Activated CD4-positive, alpha-beta T cell treated with anti-CD3 and anti-CD28 coated beads for 36 hours (primary cell): ENCODE measurements at regions of chrX and their contacts with region 1.

Region 1: DNA sequence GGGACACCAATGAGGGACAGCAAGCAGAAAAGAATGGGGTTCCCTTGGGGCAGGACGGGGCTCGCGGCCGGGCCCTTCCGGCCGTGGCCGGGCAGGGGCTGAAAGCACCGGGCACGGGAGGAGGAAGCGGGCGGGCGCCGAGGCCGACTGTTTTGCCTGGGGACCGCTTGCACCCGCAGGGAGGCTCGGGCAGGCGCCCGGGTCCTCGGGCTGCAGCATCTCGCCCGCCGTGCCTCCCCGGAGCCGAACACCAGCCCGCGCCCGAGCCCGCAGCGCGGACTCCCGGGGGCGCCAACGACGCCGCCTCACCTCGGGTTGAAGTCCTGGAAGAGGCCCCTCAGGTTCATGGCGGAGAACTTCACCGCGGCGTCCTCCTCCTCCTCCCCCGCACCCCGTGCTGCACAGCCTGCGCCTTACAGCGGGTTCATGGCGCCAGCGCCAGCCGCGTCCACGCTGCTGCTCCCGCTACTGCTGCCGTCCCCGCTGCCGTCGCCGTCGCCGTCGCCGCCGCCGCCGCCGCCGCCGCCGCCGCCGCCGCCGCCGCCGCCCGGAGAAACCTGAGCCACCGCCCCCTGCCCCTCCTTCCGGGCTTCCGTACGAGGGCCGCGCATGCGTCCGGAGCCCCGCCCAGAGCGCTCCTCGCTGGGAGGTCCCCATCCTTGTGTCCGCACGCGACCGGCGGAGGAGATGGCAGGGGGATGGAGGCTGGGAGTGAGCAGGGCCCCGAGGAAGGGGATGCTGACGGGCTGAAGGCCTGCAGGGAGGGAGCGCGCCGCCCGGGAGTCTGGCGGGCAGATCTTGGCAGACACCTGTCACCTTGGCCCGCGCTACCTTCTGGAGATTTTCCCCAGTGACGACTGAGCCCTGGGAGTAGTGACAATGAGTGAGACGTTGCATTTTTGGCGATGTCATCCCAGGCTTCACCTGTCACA is at the start of gene TMEM185A:
- DNase-seq: peak; percentile 85
- ATAC-seq: peak; percentile 85
- H3K4me3 Mint-ChIP-seq: peak within 1 kb of the TSS; percentile 85
- H3K27ac Mint-ChIP-seq: peak within 1 kb of the TSS; percentile 88
- H3K4me1 Mint-ChIP-seq: peaks cover 37% of the 10 kb centered on the region
- H3K27me3 Mint-ChIP-seq: peaks cover 4% of the 10 kb centered on the region
- total RNA-seq, gene TMEM185A: 10.2 to 14.4 TPM

Region 2: DNA sequence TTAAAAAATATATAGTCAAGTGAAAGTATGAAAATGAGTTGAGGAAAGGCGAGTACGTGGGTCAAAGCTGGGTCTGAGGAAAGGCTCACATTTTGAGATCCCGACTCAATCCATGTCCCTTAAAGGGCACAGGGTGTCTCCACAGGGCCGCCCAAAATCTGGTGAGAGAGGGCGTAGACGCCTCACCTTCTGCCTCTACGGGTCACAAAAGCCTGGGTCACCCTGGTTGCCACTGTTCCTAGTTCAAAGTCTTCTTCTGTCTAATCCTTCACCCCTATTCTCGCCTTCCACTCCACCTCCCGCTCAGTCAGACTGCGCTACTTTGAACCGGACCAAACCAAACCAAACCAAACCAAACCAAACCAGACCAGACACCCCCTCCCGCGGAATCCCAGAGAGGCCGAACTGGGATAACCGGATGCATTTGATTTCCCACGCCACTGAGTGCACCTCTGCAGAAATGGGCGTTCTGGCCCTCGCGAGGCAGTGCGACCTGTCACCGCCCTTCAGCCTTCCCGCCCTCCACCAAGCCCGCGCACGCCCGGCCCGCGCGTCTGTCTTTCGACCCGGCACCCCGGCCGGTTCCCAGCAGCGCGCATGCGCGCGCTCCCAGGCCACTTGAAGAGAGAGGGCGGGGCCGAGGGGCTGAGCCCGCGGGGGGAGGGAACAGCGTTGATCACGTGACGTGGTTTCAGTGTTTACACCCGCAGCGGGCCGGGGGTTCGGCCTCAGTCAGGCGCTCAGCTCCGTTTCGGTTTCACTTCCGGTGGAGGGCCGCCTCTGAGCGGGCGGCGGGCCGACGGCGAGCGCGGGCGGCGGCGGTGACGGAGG is 1720.1 kb before region 1 on chrX and contains the start of gene FMR1:
- CTCF ChIA-PET with region 1: no interaction called
- POLR2A ChIA-PET with region 1: no interaction called
- intact Hi-C with region 1: loop called in 1 of 2 experiments (anchors 10 kb)
- DNase-seq: peak; percentile 95
- ATAC-seq: peak; percentile 88
- H3K4me3 Mint-ChIP-seq: peak within 1 kb of the TSS; percentile 98
- H3K27ac Mint-ChIP-seq: peak within 1 kb of the TSS; percentile 95
- H3K4me1 Mint-ChIP-seq: peaks cover 28% of the 10 kb centered on the region
- H3K27me3 Mint-ChIP-seq: no peaks in the 10 kb centered on the region
- total RNA-seq, gene FMR1: 30.7 to 32.1 TPM

Region 3: DNA sequence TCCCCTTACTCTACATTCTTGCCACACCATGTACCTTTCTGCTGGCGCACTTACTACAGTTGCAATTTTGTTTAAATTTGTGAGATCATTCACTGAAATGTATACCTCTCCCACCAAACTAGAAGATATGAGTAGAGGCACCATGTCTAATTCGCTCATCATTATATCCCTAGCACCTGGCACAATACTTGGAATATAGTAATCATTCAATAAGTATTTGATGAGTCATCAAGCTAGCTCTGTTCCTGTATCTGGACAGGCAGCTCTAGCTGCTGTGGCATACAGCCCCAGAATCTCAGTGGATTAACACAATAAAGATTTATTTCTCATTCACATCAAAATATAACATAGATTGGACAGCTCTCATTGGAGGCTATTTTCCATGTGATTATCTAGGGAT is 372.3 kb before region 1 on chrX:
- CTCF ChIA-PET with region 1: no interaction called
- POLR2A ChIA-PET with region 1: no interaction called
- intact Hi-C with region 1: no loop called
- DNase-seq: no peak
- ATAC-seq: no peak
- H3K4me3 Mint-ChIP-seq: no peak overlapping the region
- H3K27ac Mint-ChIP-seq: no peak overlapping the region
- H3K4me1 Mint-ChIP-seq: no peaks in the 10 kb centered on the region
- H3K27me3 Mint-ChIP-seq: peaks cover 11% of the 10 kb centered on the region

Region 4: GRCh38 chrX:149504915-149505651 is 126.4 kb before region 1 on chrX and contains the start of gene IDS:
- CTCF ChIA-PET with region 1: no interaction called
- POLR2A ChIA-PET with region 1: no interaction called
- intact Hi-C with region 1: loop called (anchors 1 to 10 kb)
- DNase-seq: peak; percentile 93
- ATAC-seq: peak; percentile 74
- H3K4me3 Mint-ChIP-seq: peak within 1 kb of the TSS; percentile 99
- H3K27ac Mint-ChIP-seq: peak within 1 kb of the TSS; percentile 99
- H3K4me1 Mint-ChIP-seq: peaks cover 31% of the 10 kb centered on the region
- H3K27me3 Mint-ChIP-seq: peaks cover under 1% of the 10 kb centered on the region
- total RNA-seq, gene IDS: 52.6 to 64.3 TPM

Region 5: GRCh38 chrX:149512225-149512885 is 119.1 kb before region 1 on chrX:
- CTCF ChIA-PET with region 1: no interaction called
- POLR2A ChIA-PET with region 1: no interaction called
- intact Hi-C with region 1: loop called in 1 of 2 experiments (anchors 10 kb)
- DNase-seq: peak; percentile 68
- ATAC-seq: peak; percentile 77
- H3K4me3 Mint-ChIP-seq: no peak overlapping the region
- H3K27ac Mint-ChIP-seq: no peak overlapping the region
- H3K4me1 Mint-ChIP-seq: peaks cover 28% of the 10 kb centered on the region
- H3K27me3 Mint-ChIP-seq: peaks cover 2% of the 10 kb centered on the region

Region 6: GRCh38 chrX:149527705-149528104 is 103.8 kb before region 1 on chrX:
- CTCF ChIA-PET with region 1: interaction called, 4 read pairs
- POLR2A ChIA-PET with region 1: no interaction called
- intact Hi-C with region 1: loop called in 1 of 2 experiments (anchors 5 kb)
- DNase-seq: peak; percentile 43
- ATAC-seq: peak; percentile 48
- H3K4me3 Mint-ChIP-seq: no peak overlapping the region
- H3K27ac Mint-ChIP-seq: peak overlapping the region; percentile 56
- H3K4me1 Mint-ChIP-seq: peaks cover 35% of the 10 kb centered on the region
- H3K27me3 Mint-ChIP-seq: no peaks in the 10 kb centered on the region

Region 7: DNA sequence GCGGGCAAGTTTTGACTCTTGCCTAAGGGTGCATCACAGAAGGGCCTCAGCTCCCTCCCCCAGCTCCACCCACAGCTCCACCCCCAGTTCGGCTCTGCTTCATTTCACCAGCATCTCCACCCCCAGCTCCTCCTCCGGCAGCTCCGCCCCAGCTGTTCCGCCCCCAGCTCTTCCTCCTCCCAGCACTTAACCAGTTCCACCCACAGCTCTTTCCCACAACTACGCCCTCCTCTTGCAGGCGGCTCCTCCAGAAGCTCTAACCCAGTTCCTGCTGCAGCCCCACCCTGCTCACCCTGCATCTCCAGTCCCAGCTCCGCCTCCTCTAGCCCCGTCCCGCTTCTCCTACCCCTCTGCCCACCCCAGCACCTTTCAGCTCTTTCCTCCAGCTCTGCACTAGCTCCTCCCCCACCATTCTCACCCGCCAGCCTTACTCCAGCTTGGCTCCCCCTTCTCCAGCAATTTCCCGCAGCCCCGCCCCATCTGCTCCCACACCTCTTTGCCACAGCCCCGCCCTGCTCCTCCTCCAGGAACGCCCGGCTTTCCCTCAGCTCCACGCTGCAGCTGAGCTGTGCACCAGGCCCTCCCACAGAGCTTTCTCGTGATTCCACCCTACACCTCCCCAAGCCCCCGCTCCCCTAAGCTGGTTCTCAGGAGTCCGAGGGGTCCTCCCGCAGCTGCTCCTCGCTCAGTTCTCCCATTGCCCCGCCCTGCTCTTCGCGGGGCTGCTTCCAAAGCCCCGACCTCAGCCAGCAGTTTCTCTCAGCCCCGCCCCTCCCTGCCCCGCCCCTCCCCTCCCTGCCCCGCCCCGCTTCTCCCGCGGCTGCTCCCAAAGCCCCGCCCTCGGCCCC is 92.0 kb before region 1 on chrX:
- CTCF ChIA-PET with region 1: no interaction called
- POLR2A ChIA-PET with region 1: no interaction called
- intact Hi-C with region 1: loop called in 1 of 2 experiments (anchors 2 kb)
- DNase-seq: peak; percentile 91
- ATAC-seq: peak; percentile 46
- H3K4me3 Mint-ChIP-seq: peak overlapping the region; percentile 82
- H3K27ac Mint-ChIP-seq: peak overlapping the region; percentile 82
- H3K4me1 Mint-ChIP-seq: peaks cover 9% of the 10 kb centered on the region
- H3K27me3 Mint-ChIP-seq: no peaks in the 10 kb centered on the region